Transverse colon (tissue), 4 donors: ENCODE measurements at regions of chr2 and their contacts with region 1.

Region 1: GRCh38 chr2:39234754-39235153 is 9.0 kb downstream of the CDKL4 start:
- DNase-seq: no peak
- H3K4me3 ChIP-seq: no peak overlapping the region
- H3K27ac ChIP-seq: no peak overlapping the region
- H3K4me1 ChIP-seq: peaks cover 0 to 3% (median 0%) of the 10 kb centered on the region in 4 donors
- H3K27me3 ChIP-seq: no peaks in the 10 kb centered on the region
- CTCF ChIP-seq: no peak
- EP300 ChIP-seq: no peak
- POLR2A ChIP-seq: no peak

Region 2: DNA sequence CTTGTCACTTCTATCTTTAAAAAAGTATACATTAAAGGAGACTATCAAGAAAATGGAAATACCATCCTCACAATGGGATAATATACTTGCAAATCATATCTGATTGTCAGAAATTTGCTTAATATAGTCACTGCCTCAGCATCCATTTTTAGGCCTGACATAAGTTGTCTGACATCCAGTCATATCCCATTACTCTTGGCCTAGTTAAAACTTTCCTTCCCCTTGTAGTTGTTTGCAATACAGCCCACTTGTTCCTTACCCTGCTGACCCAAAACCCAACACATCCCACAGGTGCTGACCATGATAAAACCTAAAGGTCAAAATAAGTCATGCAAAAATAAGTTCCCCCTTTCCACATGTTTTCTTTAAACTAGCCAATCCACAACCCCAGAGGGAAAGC is 348.7 kb before region 1 on chr2:
- in situ Hi-C with region 1: no loop called
- intact Hi-C with region 1: no loop called
- DNase-seq: no peak
- H3K4me3 ChIP-seq: no peak overlapping the region
- H3K27ac ChIP-seq: no peak overlapping the region
- H3K4me1 ChIP-seq: no peaks in the 10 kb centered on the region
- H3K27me3 ChIP-seq: no peaks in the 10 kb centered on the region
- CTCF ChIP-seq: no peak
- EP300 ChIP-seq: no peak
- POLR2A ChIP-seq: no peak

Region 3: DNA sequence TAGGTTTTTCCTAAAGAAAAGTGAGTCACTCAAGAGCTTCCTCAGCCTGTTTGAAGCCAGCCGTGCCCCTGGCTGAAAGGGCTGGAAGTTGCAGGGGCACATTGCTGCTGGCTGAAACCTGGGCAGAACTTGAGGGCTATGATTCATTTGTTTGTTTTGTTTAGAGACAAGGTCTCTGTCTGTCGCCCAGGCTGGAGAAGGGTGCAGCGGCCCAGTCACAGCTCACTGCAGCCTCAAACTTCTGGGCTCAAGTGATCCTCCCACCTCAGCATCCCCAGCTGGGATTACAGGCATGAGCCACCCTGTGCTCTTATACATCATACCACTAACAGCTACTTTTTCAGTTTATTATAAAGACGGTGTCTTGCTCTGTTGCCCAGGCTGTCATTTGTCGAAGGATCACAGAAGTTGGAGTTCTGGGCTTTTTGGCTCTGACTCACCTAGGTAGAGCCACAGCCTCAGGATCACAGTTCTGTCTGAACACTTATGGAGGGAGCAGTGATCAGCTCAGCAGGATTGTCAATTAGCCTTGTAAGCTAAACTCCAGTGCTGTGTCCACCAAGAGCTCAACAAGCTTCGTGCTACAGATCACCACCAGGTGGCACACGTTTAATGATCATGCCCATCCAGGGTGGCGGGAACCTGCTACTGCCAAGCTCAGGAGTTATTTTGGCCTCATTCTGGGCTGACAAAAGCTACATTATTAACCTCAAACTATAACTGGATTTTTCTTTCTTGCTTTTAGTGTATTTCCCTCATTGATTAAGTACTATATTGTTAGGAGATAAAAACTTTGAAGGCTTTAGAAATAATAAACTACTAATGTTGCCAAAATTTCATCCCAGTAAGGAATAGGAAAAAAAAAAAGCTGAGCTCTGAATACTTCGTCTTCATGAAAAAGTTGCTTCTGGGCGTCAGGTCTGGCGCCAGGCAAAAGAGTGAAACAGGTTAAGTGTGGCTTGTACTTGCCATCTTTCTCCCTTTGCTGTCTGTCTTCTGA is 287.2 kb before region 1 on chr2:
- in situ Hi-C with region 1: loop called in 3 of 4 experiments (anchors 10 kb)
- intact Hi-C with region 1: no loop called
- DNase-seq: peak; percentile 70
- H3K4me3 ChIP-seq: no peak overlapping the region
- H3K27ac ChIP-seq: no peak overlapping the region
- H3K4me1 ChIP-seq: no peaks in the 10 kb centered on the region
- H3K27me3 ChIP-seq: no peaks in the 10 kb centered on the region
- CTCF ChIP-seq: peak; percentile 57 to 65 (median 62)
- EP300 ChIP-seq: no peak
- POLR2A ChIP-seq: no peak

Region 4: GRCh38 chr2:38959938-38960608 is 274.7 kb before region 1 on chr2:
- in situ Hi-C with region 1: loop called in 1 of 4 experiments (anchors 10 kb)
- intact Hi-C with region 1: no loop called
- DNase-seq: peak; percentile 67
- H3K4me3 ChIP-seq: peak overlapping the region; percentile 16 to 45 (median 26)
- H3K27ac ChIP-seq: peak overlapping the region in 1 of 4 donors; percentile 11
- H3K4me1 ChIP-seq: peaks cover 0 to 10% (median 7%) of the 10 kb centered on the region in 4 donors
- H3K27me3 ChIP-seq: peaks cover 6% of the 10 kb centered on the region
- CTCF ChIP-seq: peak in 1 of 5 experiments; percentile 5
- EP300 ChIP-seq: no peak
- POLR2A ChIP-seq: no peak

Region 5: DNA sequence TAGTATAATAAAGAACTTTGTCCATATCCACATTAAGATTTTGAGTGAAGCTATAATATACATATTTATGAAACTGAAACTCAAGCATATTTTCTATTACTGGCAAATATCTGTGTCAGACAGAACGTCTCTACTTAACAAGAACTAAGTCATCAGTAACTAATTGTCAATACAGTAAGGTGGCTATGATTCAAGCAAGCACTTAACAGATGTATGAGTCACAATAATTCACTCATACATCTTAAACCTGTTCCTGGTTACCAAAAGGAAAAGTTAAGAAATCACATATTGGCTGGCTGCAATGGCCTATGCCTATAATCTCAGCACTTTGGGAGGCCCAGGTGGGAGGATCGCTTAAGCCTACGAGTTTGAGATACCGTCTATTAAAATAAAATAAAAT is 209.9 kb before region 1 on chr2:
- in situ Hi-C with region 1: no loop called
- intact Hi-C with region 1: no loop called
- DNase-seq: no peak
- H3K4me3 ChIP-seq: no peak overlapping the region
- H3K27ac ChIP-seq: no peak overlapping the region
- H3K4me1 ChIP-seq: peaks cover 0 to 5% (median 0%) of the 10 kb centered on the region in 4 donors
- H3K27me3 ChIP-seq: no peaks in the 10 kb centered on the region
- CTCF ChIP-seq: no peak
- EP300 ChIP-seq: no peak
- POLR2A ChIP-seq: no peak